ENCODE measurements at regions of chr7 and their contacts with region 1.

Region 1: GRCh38 chr7:96321658-96322372 is at the start of gene SLC25A13:
- DNase-seq: peak; percentile 46 to 78 (median 62)
- ATAC-seq: peak; percentile 88
- H3K4me3 ChIP-seq: peak within 1 kb of the TSS; percentile 77
- H3K4me3 Mint-ChIP-seq: peak within 1 kb of the TSS; percentile 88 to 95 (median 92)
- H3K27ac ChIP-seq: peak within 1 kb of the TSS; percentile 80
- H3K27ac Mint-ChIP-seq: peak within 1 kb of the TSS; percentile 81 to 94 (median 93)
- H3K4me1 ChIP-seq: peaks cover 12 to 14% of the 10 kb centered on the region in 2 donors
- H3K4me1 Mint-ChIP-seq: peaks cover 17 to 36% (median 24%) of the 10 kb centered on the region in 7 donors
- H3K27me3 ChIP-seq: no peaks in the 10 kb centered on the region
- H3K27me3 Mint-ChIP-seq: no peaks in the 10 kb centered on the region
- total RNA-seq, gene SLC25A13: 5.7 to 22.5 (median 12.1) TPM

Region 2: DNA sequence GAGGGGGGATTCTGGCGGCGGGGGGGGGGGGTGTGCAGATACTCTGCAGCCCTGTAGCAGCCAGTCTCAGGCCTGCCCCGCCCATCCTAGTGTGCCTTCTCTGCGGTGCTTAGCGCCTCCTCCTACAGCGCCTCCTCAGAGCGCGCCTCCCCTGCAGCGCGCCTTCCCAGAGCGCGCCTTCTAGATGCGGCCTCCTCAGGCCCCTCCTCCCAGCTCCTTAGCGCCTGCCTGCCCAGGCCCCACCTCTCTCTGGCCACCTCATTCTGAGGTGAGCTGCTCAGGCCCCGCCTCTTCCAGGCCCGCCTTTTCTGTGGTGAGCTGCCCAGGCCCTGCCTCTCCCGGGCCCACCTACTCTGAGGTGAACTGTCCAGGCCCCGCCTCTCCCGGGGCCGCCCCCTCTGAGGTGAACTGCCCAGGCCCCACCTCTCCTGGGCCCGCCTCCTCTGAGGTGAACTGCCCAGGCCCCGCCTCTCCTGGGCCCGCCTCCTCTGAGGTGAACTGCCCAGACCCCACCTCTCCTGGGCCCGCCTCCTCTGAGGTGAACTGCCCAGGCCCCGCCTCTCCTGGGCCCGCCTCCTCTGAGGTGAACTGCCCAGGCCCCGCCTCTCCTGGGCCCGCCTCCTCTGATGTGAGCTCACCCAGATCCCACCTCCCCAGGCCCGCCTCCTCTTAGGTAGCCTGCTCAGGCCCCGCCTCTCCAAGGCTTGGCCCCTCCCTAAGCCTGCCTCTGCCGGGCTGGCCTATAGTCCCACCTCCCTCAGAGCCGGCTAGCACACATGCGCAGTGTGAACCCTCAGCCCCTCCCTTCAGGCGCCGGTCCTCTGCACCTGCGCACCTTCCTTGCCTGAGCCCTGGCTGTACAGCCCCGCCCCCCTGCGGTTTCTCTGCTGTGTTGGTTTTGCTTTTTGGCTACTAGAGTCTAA is 1663.8 kb before region 1 on chr7:
- CTCF ChIA-PET with region 1: no interaction called
- POLR2A ChIA-PET with region 1: no interaction called
- intact Hi-C with region 1: loop called in 1 of 2 experiments (anchors 5 kb)
- DNase-seq: peak; percentile 83 to 97 (median 95)
- ATAC-seq: peak; percentile 88
- H3K4me3 ChIP-seq: peak overlapping the region; percentile 85
- H3K4me3 Mint-ChIP-seq: peak overlapping the region; percentile 83 to 91 (median 88)
- H3K27ac ChIP-seq: no peak overlapping the region
- H3K27ac Mint-ChIP-seq: peak overlapping the region in 6 of 9 donors; percentile 17 to 84 (median 54)
- H3K4me1 ChIP-seq: peaks cover 15 to 16% of the 10 kb centered on the region in 2 donors
- H3K4me1 Mint-ChIP-seq: peaks cover 8 to 24% (median 17%) of the 10 kb centered on the region in 7 donors
- H3K27me3 ChIP-seq: peaks cover 14 to 21% of the 10 kb centered on the region in 2 donors
- H3K27me3 Mint-ChIP-seq: peaks cover 11 to 28% (median 23%) of the 10 kb centered on the region in 5 donors

Region 3: GRCh38 chr7:96303686-96304443 is 17.9 kb before region 1 on chr7:
- CTCF ChIA-PET with region 1: no interaction called
- POLR2A ChIA-PET with region 1: no interaction called
- intact Hi-C with region 1: loop called in 1 of 2 experiments (anchors 2 kb)
- DNase-seq: no peak
- ATAC-seq: no peak
- H3K4me3 ChIP-seq: no peak overlapping the region
- H3K4me3 Mint-ChIP-seq: peak overlapping the region in 3 of 10 donors; percentile 25 to 51 (median 48)
- H3K27ac ChIP-seq: no peak overlapping the region
- H3K27ac Mint-ChIP-seq: peak overlapping the region in 7 of 9 donors; percentile 26 to 93 (median 80)
- H3K4me1 ChIP-seq: peaks cover 4 to 5% of the 10 kb centered on the region in 2 donors
- H3K4me1 Mint-ChIP-seq: peaks cover 15 to 54% (median 43%) of the 10 kb centered on the region in 7 donors
- H3K27me3 ChIP-seq: no peaks in the 10 kb centered on the region
- H3K27me3 Mint-ChIP-seq: no peaks in the 10 kb centered on the region

Region 4: DNA sequence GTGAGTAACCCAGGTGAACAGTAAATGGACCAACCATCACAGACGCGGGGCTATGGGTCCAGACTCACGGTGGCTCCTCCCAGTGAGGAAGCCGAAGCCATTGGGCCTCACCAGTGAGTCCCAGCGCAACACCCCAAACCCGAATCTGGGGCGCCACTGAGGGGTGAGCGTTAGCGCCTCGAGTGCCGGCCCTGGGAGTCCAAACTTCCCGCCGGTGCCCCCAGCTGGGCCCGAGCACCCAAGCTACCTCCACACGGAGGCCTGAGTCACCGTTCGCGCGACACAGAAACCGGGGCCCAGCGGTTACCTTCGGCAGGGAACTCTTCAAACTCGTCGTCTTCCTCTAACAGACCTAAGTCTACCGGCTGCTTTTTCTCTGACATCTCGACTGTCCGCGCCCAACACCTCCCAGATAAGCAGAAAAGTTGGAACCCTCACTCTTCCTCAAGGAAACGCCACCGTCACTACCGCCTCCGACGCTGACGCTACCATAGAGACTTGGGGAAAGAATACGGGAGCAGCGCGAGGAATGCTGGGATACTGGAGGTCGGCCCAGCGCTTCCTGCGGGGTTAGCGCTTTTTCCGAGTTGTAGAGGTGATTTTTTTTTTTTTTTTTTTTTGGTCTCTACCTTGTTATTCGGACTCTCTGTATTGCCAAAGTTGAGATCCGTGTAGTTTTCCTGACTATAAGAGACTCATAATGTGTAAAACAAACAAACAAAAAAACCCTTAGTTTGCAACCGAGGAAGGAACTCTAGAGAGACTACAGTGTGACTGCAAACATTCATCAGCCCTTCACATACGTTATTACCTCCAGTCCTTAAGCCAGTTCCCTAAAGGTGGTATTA is 387.8 kb after region 1 on chr7 and contains the start of gene SEM1:
- CTCF ChIA-PET with region 1: no interaction called
- POLR2A ChIA-PET with region 1: no interaction called
- intact Hi-C with region 1: loop called (anchors 5 kb)
- DNase-seq: peak; percentile 20 to 65 (median 53)
- ATAC-seq: peak; percentile 88
- H3K4me3 ChIP-seq: peak within 1 kb of the TSS; percentile 70
- H3K4me3 Mint-ChIP-seq: peak within 1 kb of the TSS; percentile 96 to 100 (median 100)
- H3K27ac ChIP-seq: peak within 1 kb of the TSS; percentile 74
- H3K27ac Mint-ChIP-seq: peak within 1 kb of the TSS; percentile 88 to 100 (median 97)
- H3K4me1 ChIP-seq: peaks cover 13 to 14% of the 10 kb centered on the region in 2 donors
- H3K4me1 Mint-ChIP-seq: peaks cover 16 to 52% (median 42%) of the 10 kb centered on the region in 7 donors
- H3K27me3 ChIP-seq: no peaks in the 10 kb centered on the region
- H3K27me3 Mint-ChIP-seq: peaks cover 0 to 9% (median 8%) of the 10 kb centered on the region in 5 donors
- total RNA-seq, gene SEM1: 15.4 to 46.6 (median 28.3) TPM

Region 5: GRCh38 chr7:97117372-97118188 is 795.8 kb after region 1 on chr7 and contains the start of gene SDHAF3:
- CTCF ChIA-PET with region 1: no interaction called
- POLR2A ChIA-PET with region 1: no interaction called
- intact Hi-C with region 1: loop called (anchors 1 kb)
- DNase-seq: peak; percentile 97 to 98 (median 98)
- ATAC-seq: peak; percentile 98
- H3K4me3 ChIP-seq: peak within 1 kb of the TSS; percentile 90
- H3K4me3 Mint-ChIP-seq: peak within 1 kb of the TSS; percentile 87 to 98 (median 96)
- H3K27ac ChIP-seq: peak within 1 kb of the TSS; percentile 71
- H3K27ac Mint-ChIP-seq: peak within 1 kb of the TSS; percentile 87 to 97 (median 94)
- H3K4me1 ChIP-seq: peaks cover 7 to 15% of the 10 kb centered on the region in 2 donors
- H3K4me1 Mint-ChIP-seq: peaks cover 17 to 67% (median 57%) of the 10 kb centered on the region in 7 donors
- H3K27me3 ChIP-seq: no peaks in the 10 kb centered on the region
- H3K27me3 Mint-ChIP-seq: peaks cover 0 to 2% (median 0%) of the 10 kb centered on the region in 5 donors
- total RNA-seq, gene SDHAF3: 8.4 to 16.5 (median 14.3) TPM